AG04450 (cell line): ENCODE measurements at regions of chr6 and their contacts with region 1.

Region 1: DNA sequence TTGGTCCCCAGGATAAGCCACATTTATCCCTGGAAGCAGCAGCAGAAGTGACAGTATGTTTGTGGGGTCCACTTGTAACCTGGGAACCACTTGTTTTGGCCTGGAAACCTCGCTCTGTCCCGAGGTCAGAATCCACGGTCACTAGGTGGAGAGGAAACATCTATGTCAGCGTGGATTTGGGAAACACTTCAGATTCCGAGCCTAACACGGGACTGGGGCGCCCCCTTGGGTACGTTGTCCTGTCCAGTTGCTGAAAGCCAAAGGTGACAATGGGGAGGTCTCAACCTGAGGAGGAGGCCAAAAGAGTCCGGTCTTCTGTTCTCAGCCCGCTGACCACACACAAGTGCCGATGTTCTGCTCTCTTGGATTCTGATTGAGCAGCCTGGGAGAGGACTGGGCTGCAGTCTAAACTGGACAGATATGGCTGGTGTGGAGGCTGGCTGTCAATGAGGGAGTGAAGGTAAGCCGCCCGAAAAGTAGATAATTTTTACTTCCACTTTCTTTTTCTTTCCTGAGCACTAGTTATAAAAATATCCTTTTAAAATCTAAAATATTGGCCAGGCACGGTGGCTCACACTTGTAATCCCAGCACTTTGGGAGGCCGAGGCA is 4.9 kb upstream of the ZFP57 start:
- DNase-seq: no peak
- H3K4me3 ChIP-seq: no peak overlapping the region
- H3K27ac ChIP-seq: no peak overlapping the region
- H3K27me3 ChIP-seq: peaks cover 2% of the 10 kb centered on the region
- CTCF ChIP-seq: no peak

Region 2: GRCh38 chr6:28643017-28643740 is 1042.6 kb before region 1 on chr6:
- CTCF ChIA-PET with region 1: interaction called, 12 read pairs
- POLR2A ChIA-PET with region 1: no interaction called
- DNase-seq: peak; percentile 26
- H3K4me3 ChIP-seq: no peak overlapping the region
- H3K27ac ChIP-seq: no peak overlapping the region
- H3K27me3 ChIP-seq: no peaks in the 10 kb centered on the region
- CTCF ChIP-seq: no peak

Region 3: GRCh38 chr6:29665942-29666825 is 19.6 kb before region 1 on chr6:
- CTCF ChIA-PET with region 1: no interaction called
- POLR2A ChIA-PET with region 1: interaction called, 10 read pairs
- DNase-seq: no peak
- H3K4me3 ChIP-seq: no peak overlapping the region
- H3K27ac ChIP-seq: no peak overlapping the region
- H3K27me3 ChIP-seq: peaks cover 8% of the 10 kb centered on the region
- CTCF ChIP-seq: no peak